ENCODE measurements at regions of chr11 and their contacts with region 1.

Region 1: DNA sequence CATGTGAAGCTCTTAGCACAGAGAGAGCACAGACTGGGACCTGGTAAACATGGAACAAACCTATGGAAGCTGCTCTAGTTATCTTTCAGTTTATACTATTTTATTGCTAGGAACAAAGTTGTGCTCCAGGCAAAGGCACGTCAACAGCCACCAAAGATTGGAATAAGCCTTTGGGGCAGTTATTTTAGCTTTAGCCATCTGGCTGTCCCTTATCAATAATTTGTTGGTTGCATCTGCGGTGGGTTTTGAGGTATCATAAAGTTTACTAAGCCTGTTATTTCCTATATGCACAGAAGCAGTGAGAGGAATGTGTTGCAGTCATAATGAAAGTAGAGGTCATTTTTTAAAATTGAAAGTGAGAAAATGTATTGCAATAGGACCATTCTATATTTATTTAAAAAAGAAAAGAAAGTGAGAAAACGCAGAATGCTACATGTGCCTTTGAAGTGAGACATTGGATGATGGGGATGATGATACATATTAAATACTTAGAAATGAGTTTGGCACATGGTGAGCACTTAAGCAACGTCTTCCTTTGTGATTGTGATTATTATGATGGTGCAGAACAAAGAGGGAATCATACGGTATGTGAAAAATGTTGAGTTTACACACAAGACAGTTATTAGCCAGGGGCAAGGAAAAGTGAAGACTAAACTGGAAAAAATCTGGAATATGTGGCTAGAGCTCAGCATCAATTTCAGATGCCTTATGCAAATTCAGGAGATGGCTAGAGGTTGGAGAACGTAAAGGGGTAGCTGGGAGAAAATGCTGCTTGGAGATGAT is 58.3 kb downstream of the PRR5L start:
- DNase-seq: peak in 1 of 9 experiments; percentile 18
- ATAC-seq: no peak
- H3K4me3 ChIP-seq: no peak overlapping the region
- H3K4me3 Mint-ChIP-seq: no peak overlapping the region
- H3K27ac ChIP-seq: no peak overlapping the region
- H3K27ac Mint-ChIP-seq: no peak overlapping the region
- H3K4me1 ChIP-seq: peaks cover 11% of the 10 kb centered on the region
- H3K4me1 Mint-ChIP-seq: peaks cover 28% of the 10 kb centered on the region
- H3K27me3 ChIP-seq: peaks cover 0 to 3% of the 10 kb centered on the region in 2 experiments
- H3K27me3 Mint-ChIP-seq: peaks cover 14% of the 10 kb centered on the region
- CTCF ChIP-seq: no peak

Region 2: GRCh38 chr11:36376888-36377758 is 22.7 kb after region 1 on chr11:
- CTCF ChIA-PET with region 1: interaction called, 11 read pairs
- POLR2A ChIA-PET with region 1: interaction called, 4 read pairs
- intact Hi-C with region 1: loop called in 1 of 2 experiments (anchors 1 kb)
- DNase-seq: peak; percentile 21 to 82 (median 53)
- ATAC-seq: peak; percentile 63
- H3K4me3 ChIP-seq: peak overlapping the region; percentile 47 to 85
- H3K4me3 Mint-ChIP-seq: peak overlapping the region; percentile 92
- H3K27ac ChIP-seq: peak overlapping the region; percentile 48 to 76
- H3K27ac Mint-ChIP-seq: peak overlapping the region; percentile 91
- H3K4me1 ChIP-seq: peaks cover 3% of the 10 kb centered on the region
- H3K4me1 Mint-ChIP-seq: peaks cover 37% of the 10 kb centered on the region
- H3K27me3 ChIP-seq: peaks cover 0 to 2% of the 10 kb centered on the region in 2 experiments
- H3K27me3 Mint-ChIP-seq: peaks cover 27% of the 10 kb centered on the region
- CTCF ChIP-seq: peak; percentile 32

Region 3: DNA sequence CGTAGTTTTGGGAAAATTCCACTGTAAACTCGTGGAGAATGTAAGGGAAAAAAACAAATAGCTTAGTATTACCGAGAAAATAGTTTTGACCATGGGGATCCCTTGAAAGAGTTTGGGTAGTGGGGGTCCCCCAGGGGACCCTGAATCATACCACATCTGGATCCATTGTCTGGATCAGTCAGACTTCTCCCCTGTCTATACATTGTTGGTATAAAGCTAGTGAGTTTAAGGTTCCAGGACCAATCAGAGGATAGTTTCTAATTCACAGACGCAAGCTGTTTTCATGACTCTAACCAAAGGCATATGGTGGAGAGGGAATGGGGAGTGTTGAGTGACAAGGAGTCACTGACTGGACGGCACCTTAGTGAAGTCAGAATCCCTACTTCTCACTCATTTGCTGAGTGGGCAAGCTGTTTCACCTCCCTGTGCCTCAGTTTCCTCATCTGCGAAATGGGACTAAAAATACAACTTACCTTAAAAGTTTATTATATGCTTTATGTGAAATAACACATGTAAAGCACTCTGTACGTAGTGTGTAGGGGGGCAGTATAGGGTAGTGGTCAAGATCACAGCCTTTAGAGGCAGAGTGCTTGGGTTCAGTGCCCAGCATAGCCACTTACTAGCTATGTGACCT is 65.5 kb after region 1 on chr11:
- CTCF ChIA-PET with region 1: interaction called, 4 read pairs
- POLR2A ChIA-PET with region 1: no interaction called
- intact Hi-C with region 1: loop called (anchors 1 to 5 kb)
- DNase-seq: no peak
- ATAC-seq: no peak
- H3K4me3 ChIP-seq: no peak overlapping the region
- H3K4me3 Mint-ChIP-seq: no peak overlapping the region
- H3K27ac ChIP-seq: peak overlapping the region in 1 of 2 experiments; percentile 69
- H3K27ac Mint-ChIP-seq: peak overlapping the region; percentile 41
- H3K4me1 ChIP-seq: peaks cover 18% of the 10 kb centered on the region
- H3K4me1 Mint-ChIP-seq: peaks cover 42% of the 10 kb centered on the region
- H3K27me3 ChIP-seq: no peaks in the 10 kb centered on the region
- H3K27me3 Mint-ChIP-seq: peaks cover 7% of the 10 kb centered on the region
- CTCF ChIP-seq: no peak

Region 4: DNA sequence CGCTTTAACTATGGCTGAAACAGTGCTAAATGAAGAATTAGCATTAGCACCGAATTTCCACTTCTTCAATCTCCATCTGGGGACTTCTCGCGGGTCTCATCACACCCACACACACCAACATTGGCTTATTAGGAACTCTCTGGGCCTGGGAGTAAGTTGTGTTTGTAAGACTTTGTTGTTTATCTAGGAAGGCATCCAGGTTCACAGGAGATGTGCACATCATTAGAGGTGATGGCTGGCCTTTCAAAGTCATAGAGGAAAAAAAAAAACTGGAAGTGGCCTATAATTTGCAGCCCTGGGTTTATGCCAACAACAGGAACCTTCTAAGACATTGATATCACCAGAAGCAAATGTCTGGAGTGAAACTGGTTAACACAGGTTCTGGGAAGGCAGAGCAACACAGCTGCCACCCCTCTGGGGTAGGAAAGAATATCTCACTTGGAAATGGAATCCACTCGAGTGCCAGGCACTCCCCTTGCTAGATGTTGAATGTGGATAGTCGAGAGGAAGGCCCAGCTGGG is 71.2 kb after region 1 on chr11:
- CTCF ChIA-PET with region 1: interaction called, 4 read pairs
- POLR2A ChIA-PET with region 1: no interaction called
- intact Hi-C with region 1: loop called (anchors 1 to 5 kb)
- DNase-seq: no peak
- ATAC-seq: no peak
- H3K4me3 ChIP-seq: no peak overlapping the region
- H3K4me3 Mint-ChIP-seq: no peak overlapping the region
- H3K27ac ChIP-seq: peak overlapping the region in 1 of 2 experiments; percentile 55
- H3K27ac Mint-ChIP-seq: peak overlapping the region; percentile 10
- H3K4me1 ChIP-seq: peaks cover 12% of the 10 kb centered on the region
- H3K4me1 Mint-ChIP-seq: peaks cover 28% of the 10 kb centered on the region
- H3K27me3 ChIP-seq: no peaks in the 10 kb centered on the region
- H3K27me3 Mint-ChIP-seq: peaks cover 7% of the 10 kb centered on the region
- CTCF ChIP-seq: no peak

Region 5: GRCh38 chr11:36478700-36479329 is 124.4 kb after region 1 on chr11:
- CTCF ChIA-PET with region 1: interaction called, 17 read pairs
- POLR2A ChIA-PET with region 1: interaction called, 4 read pairs
- intact Hi-C with region 1: loop called (anchors 1 to 2 kb)
- DNase-seq: peak in 3 of 9 experiments; percentile 24 to 66 (median 60)
- ATAC-seq: no peak
- H3K4me3 ChIP-seq: no peak overlapping the region
- H3K4me3 Mint-ChIP-seq: no peak overlapping the region
- H3K27ac ChIP-seq: no peak overlapping the region
- H3K27ac Mint-ChIP-seq: no peak overlapping the region
- H3K4me1 ChIP-seq: no peaks in the 10 kb centered on the region
- H3K4me1 Mint-ChIP-seq: peaks cover 6% of the 10 kb centered on the region
- H3K27me3 ChIP-seq: no peaks in the 10 kb centered on the region
- H3K27me3 Mint-ChIP-seq: no peaks in the 10 kb centered on the region
- CTCF ChIP-seq: peak; percentile 39

Region 6: GRCh38 chr11:36594316-36594989 is 240.0 kb after region 1 on chr11 and contains the start of gene IFTAP:
- CTCF ChIA-PET with region 1: no interaction called
- POLR2A ChIA-PET with region 1: no interaction called
- intact Hi-C with region 1: no loop called
- DNase-seq: peak in 5 of 9 experiments; percentile 1 to 54 (median 41)
- ATAC-seq: peak; percentile 67
- H3K4me3 ChIP-seq: peak within 1 kb of the TSS; percentile 27 to 54
- H3K4me3 Mint-ChIP-seq: peak within 1 kb of the TSS; percentile 91
- H3K27ac ChIP-seq: no peak within 1 kb of the TSS
- H3K27ac Mint-ChIP-seq: no peak within 1 kb of the TSS
- H3K4me1 ChIP-seq: no peaks in the 10 kb centered on the region
- H3K4me1 Mint-ChIP-seq: peaks cover 8% of the 10 kb centered on the region
- H3K27me3 ChIP-seq: no peaks in the 10 kb centered on the region
- H3K27me3 Mint-ChIP-seq: peaks cover 34% of the 10 kb centered on the region
- CTCF ChIP-seq: no peak
- total RNA-seq, gene IFTAP: 0.62 to 0.69 TPM